Posterior cingulate gyrus (tissue), 11 donors: ENCODE measurements at regions of chr5 and their contacts with region 1.

Region 1: DNA sequence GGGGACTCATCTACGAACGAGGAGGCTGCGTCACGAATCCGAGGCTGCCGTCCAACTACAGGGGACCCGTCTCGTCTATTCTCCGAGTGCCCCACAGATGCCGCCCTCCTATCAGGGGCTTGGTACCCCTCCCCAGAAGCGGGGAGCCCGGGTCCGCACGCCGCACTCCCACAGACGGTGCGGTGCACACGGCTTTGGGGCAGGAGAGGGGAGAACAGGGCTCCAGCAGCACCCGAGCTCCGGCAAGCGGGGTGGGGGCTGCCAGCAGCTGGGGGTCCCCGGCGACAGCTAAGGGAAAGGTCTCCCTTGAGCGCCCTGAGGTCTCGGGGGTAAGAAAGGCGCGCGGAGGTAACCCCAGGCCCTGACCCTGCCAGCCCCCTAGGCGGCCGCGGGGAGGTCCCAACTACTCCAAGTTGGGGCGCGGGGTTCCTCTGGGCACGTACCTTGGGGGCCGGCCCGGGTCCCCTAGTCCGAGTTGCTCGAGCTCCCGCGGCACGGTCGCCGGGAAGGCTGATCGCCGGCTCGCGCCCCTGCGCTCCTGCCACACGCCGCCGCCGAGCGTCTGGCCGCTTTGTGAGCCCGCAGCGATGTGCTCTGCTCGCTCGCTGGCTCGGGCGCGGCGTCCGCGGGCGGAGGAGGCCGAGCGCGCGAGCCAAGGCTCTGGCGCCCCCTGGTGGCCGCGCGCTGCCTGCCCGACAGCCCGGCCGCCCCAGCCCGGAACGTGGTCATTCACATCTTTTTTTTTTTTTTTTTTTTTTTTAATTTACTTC is at the start of gene SPOCK1:
- DNase-seq: peak; percentile 64 to 97 (median 74)

Region 2: DNA sequence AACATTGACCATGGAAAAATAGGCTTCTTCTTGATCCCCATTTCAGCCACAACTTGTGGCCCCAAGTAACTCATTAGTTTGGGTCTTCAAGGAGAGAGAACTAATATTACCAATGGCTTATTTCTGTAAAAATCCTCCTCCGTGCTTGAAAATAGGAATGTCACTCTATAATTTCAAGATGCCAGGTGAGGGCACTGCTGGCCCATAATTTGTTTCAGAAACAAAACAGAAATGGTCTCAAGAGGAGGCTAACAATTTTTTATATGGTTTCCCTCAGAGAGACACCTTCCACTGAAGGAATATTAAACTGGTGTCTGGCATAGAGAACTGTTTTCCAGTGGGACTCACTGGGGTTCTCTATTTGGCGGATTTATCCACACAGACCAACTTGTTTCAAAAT is 696.5 kb before region 1 on chr5:
- intact Hi-C with region 1: loop called (anchors 2 kb)
- DNase-seq: peak in 4 of 10 donors; percentile 15 to 43 (median 31)

Region 3: GRCh38 chr5:137320056-137321045 is 178.6 kb before region 1 on chr5:
- intact Hi-C with region 1: loop called (anchors 1 kb)
- DNase-seq: peak in 1 of 10 donors; percentile 36

Region 4: DNA sequence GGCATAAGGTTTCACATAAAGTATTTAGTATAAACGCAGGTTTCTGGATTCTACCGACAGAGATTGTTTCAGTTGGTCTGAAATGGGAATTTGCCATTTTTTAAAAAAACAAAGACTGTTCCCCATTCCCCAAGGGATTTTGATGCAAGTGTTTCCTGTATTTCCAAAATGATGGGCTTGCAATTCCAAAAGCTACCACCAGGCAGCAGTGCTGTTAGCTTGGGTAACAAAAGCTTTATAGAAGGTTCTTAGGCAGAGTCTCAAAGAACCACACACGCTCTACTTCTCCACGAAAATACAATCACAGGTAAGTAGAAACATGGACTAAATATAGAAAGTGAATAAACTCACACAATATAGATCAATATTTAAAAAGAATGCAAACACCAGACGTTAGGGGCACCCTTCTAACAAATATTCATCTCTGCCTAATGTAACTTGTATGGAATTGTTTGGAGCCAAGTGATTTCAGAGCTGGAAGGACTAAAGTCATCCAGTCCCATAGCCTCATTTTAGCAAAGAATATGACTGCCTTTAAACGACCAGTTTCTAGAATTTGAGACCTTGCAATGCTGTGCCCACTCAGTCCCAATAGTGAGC is 154.1 kb before region 1 on chr5:
- intact Hi-C with region 1: loop called (anchors 5 kb)
- DNase-seq: peak in 3 of 10 donors; percentile 34 to 60 (median 56)

Region 5: GRCh38 chr5:137461391-137462264 is 37.3 kb before region 1 on chr5:
- intact Hi-C with region 1: loop called (anchors 5 kb)
- DNase-seq: no peak

Region 6: DNA sequence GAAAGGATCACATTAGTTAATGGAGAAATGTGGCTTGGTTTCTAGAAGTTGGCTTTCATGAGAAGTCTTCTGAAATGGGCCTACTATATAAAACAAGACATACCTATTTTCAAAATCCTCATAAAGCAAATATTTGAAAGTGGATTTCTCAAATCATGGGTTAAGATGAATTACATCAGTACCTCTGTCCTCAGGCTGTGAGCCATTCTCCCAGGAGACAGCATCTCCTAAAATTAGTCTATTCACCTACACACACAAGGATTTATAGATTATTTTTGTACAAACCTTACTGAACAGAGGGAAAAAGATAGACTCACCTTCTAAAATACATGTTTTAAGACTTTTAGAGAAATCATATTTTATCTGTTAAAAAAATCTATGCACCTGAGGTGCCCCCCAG is 32.3 kb after region 1 on chr5:
- intact Hi-C with region 1: no loop called
- DNase-seq: no peak